T-cell (primary cell): ENCODE measurements at regions of chr21 and their contacts with region 1.

Region 1: DNA sequence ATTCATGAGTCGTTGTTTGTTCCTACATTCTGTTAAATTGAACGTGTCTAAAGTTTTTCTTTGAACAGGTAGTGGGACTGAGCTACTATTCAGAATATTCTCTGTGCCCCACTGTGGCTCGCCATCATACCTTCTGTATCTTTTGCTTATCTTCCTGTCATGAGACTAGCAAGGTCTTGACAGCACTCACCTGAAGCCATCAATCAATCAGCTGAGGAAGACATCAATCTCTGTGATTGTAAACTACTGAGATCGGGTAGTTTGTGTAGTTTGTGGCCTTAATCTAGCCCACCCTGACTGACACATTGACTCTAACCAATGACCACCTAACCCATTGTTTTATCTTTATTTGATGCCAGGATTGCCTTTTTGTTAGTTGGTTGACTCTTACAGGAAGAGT is 17.7 kb upstream of the RUNX1 start:
- DNase-seq: no peak
- ATAC-seq: no peak
- H3K4me3 ChIP-seq: no peak overlapping the region
- H3K4me3 Mint-ChIP-seq: no peak overlapping the region
- H3K27ac ChIP-seq: no peak overlapping the region
- H3K27ac Mint-ChIP-seq: no peak overlapping the region
- H3K4me1 ChIP-seq: no peaks in the 10 kb centered on the region
- H3K4me1 Mint-ChIP-seq: peaks cover 3 to 8% (median 7%) of the 10 kb centered on the region in 3 donors
- H3K27me3 ChIP-seq: no peaks in the 10 kb centered on the region
- H3K27me3 Mint-ChIP-seq: no peaks in the 10 kb centered on the region

Region 2: DNA sequence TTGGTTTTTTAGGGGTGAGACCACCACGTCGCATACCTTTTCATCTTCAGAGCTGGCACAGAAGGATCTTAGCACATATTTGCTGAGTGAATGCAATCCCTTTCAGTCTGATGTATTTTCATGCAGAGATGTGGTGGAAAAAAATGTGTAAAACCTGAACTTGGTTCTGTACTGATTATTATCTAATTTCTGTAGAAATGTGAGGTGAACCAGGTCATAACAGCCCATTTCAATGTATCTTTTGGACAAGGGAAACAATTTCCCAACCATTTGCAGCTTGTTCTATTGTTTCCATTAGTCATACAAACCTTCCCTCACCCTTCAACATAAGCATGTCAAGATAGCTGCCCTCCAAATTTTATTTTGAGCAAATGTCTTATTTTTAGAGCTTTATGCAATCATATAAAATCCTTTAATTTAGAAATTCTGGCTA is 29.1 kb after region 1 on chr21:
- CTCF ChIA-PET with region 1: interaction called in 1 of 2 experiments, 12 read pairs
- POLR2A ChIA-PET with region 1: interaction called in 1 of 2 experiments, 4 read pairs
- DNase-seq: no peak
- ATAC-seq: no peak
- H3K4me3 ChIP-seq: no peak overlapping the region
- H3K4me3 Mint-ChIP-seq: no peak overlapping the region
- H3K27ac ChIP-seq: no peak overlapping the region
- H3K27ac Mint-ChIP-seq: no peak overlapping the region
- H3K4me1 ChIP-seq: peaks cover 0 to 5% of the 10 kb centered on the region in 2 experiments
- H3K4me1 Mint-ChIP-seq: no peaks in the 10 kb centered on the region
- H3K27me3 ChIP-seq: no peaks in the 10 kb centered on the region
- H3K27me3 Mint-ChIP-seq: peaks cover 0 to 2% of the 10 kb centered on the region in 2 donors

Region 3: GRCh38 chr21:35328856-35329455 is 262.1 kb after region 1 on chr21:
- CTCF ChIA-PET with region 1: no interaction called
- POLR2A ChIA-PET with region 1: interaction called in 1 of 2 experiments, 12 read pairs
- DNase-seq: no peak
- ATAC-seq: no peak
- H3K4me3 ChIP-seq: no peak overlapping the region
- H3K4me3 Mint-ChIP-seq: no peak overlapping the region
- H3K27ac ChIP-seq: no peak overlapping the region
- H3K27ac Mint-ChIP-seq: no peak overlapping the region
- H3K4me1 ChIP-seq: no peaks in the 10 kb centered on the region
- H3K4me1 Mint-ChIP-seq: peaks cover 0 to 8% (median 1%) of the 10 kb centered on the region in 3 donors
- H3K27me3 ChIP-seq: no peaks in the 10 kb centered on the region
- H3K27me3 Mint-ChIP-seq: no peaks in the 10 kb centered on the region